ENCODE measurements at regions of chr1 and their contacts with region 1.

Region 1: DNA sequence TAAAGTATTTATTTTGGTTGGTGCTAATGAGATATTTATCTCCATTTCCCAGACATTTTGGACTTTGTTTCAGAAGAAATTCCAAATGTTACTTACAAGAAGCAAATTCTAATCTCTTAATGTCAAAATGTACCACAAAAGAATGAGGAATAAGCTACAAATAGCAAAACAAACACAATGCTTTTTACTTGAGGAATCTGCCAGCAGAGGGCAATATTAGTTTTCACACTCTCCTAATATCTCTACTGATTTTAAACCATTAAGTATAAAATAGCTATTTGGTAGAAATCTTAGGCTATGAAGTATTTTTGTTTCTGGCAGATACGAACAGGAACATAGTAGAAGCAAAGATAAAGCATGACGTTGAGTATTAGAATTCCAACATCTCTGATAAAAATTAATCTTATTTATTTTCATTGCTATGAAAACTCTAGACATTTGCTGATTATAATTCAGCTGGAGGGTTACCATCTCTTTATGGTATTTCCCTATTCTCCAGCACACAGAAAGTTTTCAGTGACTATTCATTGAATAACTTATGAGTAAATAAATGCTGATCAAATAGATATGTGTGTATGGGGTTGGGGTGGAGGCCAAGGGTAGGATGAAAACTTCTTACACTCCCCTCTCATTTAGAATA is 13.4 kb upstream of the HMCN1 start:
- DNase-seq: no peak
- H3K4me3 ChIP-seq: no peak overlapping the region
- H3K27ac ChIP-seq: no peak overlapping the region
- H3K4me1 ChIP-seq: no peaks in the 10 kb centered on the region
- H3K27me3 ChIP-seq: peaks cover 9% of the 10 kb centered on the region
- CTCF ChIP-seq: peak in 4 of 5 experiments; percentile 26 to 32 (median 30)
- EP300 ChIP-seq: no peak
- POLR2A ChIP-seq: no peak

Region 2: GRCh38 chr1:186212544-186213226 is 491.9 kb after region 1 on chr1:
- in situ Hi-C with region 1: loop called in 1 of 4 experiments (anchors 10 kb)
- intact Hi-C with region 1: no loop called
- DNase-seq: peak; percentile 11
- H3K4me3 ChIP-seq: no peak overlapping the region
- H3K27ac ChIP-seq: no peak overlapping the region
- H3K4me1 ChIP-seq: no peaks in the 10 kb centered on the region
- H3K27me3 ChIP-seq: no peaks in the 10 kb centered on the region
- CTCF ChIP-seq: peak; percentile 60 to 84 (median 71)
- EP300 ChIP-seq: no peak
- POLR2A ChIP-seq: no peak